IMR-90 (cell line): ENCODE measurements at regions of chr1 and their contacts with region 1.

Region 1: DNA sequence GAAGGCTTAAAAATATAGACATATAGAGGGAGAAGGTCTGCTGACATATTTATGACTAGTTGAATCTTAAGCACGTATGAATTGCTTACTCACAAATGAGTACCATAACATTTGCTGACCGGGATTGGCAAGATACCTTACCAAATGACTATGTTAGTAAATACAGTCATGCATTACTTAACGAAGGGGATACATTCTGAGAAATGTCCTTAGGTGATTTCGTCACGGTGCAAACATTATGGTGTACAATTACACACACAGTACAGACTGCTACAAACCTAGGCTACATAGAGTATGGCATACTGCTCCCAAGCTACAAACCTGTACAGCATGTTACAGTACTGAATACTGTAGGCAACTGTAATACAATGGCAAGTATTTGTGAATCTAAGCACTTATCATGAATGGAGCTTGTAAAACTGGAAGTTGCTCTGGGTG is 19.4 kb upstream of the UBE2U start:
- DNase-seq: peak; percentile 93
- ATAC-seq: peak; percentile 84
- H3K4me3 ChIP-seq: no peak overlapping the region
- H3K27ac ChIP-seq: no peak overlapping the region
- H3K4me1 ChIP-seq: peaks cover 6% of the 10 kb centered on the region
- H3K27me3 ChIP-seq: no peaks in the 10 kb centered on the region
- CTCF ChIP-seq: no peak
- POLR2A ChIP-seq: no peak
- RAD21 ChIP-seq: peak; percentile 7; the same call in 1 of the 2 replicates

Region 2: DNA sequence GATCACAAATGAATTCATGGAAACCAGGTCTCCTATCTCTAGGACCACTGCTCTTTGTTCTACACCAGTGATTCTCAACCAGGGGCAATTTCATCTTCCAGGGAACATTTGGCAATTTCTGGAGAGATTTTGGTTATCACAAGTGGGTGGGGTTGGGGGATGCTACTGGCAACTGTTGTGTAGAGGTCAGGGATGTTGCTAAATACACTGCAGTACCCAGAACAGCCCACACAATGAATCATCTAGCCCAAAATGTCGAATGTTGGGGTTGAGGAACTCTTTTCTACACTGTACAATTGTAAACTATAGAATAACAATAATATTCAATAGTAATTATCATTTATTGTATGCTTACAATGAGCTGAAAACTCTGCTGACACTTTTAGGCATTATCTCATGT is 36.3 kb before region 1 on chr1:
- CTCF ChIA-PET with region 1: no interaction called
- POLR2A ChIA-PET with region 1: no interaction called
- dilution Hi-C with region 1: no loop called
- in situ Hi-C with region 1: no loop called
- intact Hi-C with region 1: loop called (anchors 1 kb)
- DNase-seq: no peak
- ATAC-seq: peak; percentile 27; the same call in 1 of the 2 replicates
- H3K4me3 ChIP-seq: no peak overlapping the region
- H3K27ac ChIP-seq: no peak overlapping the region
- H3K4me1 ChIP-seq: no peaks in the 10 kb centered on the region
- H3K27me3 ChIP-seq: no peaks in the 10 kb centered on the region
- CTCF ChIP-seq: no peak
- POLR2A ChIP-seq: no peak
- RAD21 ChIP-seq: no peak